CD4-positive, alpha-beta memory T cell (primary cell): ENCODE measurements at regions of chr6 and their contacts with region 1.

Region 1: DNA sequence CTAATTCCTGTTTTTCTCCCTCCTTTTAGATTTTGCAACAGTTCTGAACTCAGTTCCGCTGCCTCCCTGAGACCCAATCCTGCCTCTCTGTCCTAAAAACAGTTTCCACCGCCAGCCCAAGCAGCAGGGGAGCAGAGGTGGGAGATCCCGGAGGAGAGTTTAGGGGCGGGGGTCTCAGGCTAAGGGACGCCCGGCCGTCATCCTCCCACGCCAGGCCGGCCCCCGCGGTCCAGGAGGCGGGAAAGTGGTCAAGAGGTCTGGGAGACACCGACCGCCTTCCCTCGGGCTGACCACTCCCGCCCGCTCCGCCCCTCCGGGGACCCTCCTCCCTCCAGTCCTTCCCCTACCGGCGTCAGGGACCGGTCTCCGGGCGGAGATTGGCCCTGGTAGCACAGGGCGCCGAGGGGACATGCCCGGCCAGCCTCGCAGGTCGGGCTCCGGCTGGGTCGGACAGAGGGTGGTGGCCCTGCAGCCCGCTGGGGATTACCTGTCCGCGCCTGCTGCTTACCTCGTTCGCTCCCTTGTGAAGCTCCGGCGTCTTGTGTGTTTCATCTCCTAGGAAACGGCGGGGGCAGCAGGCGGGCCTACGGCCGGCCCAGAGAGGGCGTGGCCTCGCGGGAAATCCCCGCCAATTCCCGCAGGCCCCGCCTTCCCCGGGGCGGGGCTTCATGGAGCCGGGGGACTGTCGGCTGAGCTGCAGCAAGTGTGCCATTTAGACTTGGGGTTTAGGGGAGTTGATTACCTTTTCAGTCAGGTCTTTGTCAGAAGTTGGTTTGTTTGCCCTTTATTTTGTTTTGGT is at the start of gene MAK:
- DNase-seq: peak; percentile 89 to 91 (median 90)
- H3K4me3 ChIP-seq: peak within 1 kb of the TSS; percentile 5 to 44
- H3K4me3 Mint-ChIP-seq: peak within 1 kb of the TSS; percentile 79 to 92 (median 84)
- H3K27ac ChIP-seq: peak within 1 kb of the TSS; percentile 22
- H3K27ac Mint-ChIP-seq: peak within 1 kb of the TSS; percentile 36 to 90 (median 82)
- H3K4me1 ChIP-seq: peaks cover 25% of the 10 kb centered on the region
- H3K4me1 Mint-ChIP-seq: peaks cover 7 to 26% (median 20%) of the 10 kb centered on the region in 4 donors
- H3K27me3 ChIP-seq: peaks cover 41% of the 10 kb centered on the region
- H3K27me3 Mint-ChIP-seq: peaks cover 37 to 51% of the 10 kb centered on the region in 2 donors
- total RNA-seq, gene MAK: not detected

Region 2: DNA sequence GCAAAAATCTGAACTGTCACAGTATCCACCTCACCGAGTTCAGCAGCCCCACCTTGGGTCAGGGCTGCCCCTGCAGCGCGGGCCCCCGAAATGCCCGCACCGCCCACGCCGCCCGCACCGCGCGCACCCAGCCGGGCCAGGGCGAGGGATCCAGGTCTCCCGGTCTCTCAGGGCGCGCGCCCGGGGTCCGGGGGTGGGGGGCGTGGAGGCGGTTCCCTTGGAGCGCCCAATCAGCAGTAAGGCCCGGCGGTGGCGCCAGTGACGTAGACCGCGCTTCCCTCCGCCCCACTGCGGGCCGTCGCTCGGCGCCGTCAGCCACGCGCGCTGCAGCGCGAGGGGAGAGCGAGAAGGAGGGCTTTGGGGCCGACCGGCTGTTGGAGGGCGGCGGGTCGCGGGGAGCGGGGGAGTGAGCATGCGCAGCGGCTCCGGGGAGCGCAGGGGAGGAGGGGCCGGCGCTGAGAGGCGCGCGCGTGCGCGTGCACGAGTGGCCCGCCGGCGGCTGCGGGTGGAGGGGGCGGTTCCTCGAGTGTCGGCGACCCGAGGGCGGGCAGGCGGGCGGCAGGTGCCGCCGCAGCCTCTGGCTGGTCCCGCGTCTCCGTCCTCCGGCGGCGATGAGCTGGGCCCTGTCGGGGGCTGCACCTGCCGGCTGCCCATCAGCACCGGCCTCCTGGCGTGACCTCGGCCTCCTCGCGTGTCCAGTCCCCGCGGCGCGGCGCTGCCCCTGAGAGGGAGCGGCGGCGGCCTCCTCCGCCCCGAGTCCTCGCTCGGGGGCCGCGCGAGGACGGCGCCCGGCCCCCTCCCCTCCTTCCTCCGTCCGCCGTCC is 699.2 kb after region 1 on chr6 and contains the start of gene TMEM170B:
- CTCF ChIA-PET with region 1: no interaction called
- POLR2A ChIA-PET with region 1: no interaction called
- intact Hi-C with region 1: loop called (anchors 5 kb)
- DNase-seq: peak; percentile 94 to 98 (median 97)
- H3K4me3 ChIP-seq: peak within 1 kb of the TSS; percentile 60 to 77
- H3K4me3 Mint-ChIP-seq: peak within 1 kb of the TSS; percentile 86 to 92 (median 90)
- H3K27ac ChIP-seq: peak within 1 kb of the TSS; percentile 54
- H3K27ac Mint-ChIP-seq: peak within 1 kb of the TSS; percentile 72 to 94 (median 92)
- H3K4me1 ChIP-seq: peaks cover 11% of the 10 kb centered on the region
- H3K4me1 Mint-ChIP-seq: peaks cover 7 to 24% (median 9%) of the 10 kb centered on the region in 4 donors
- H3K27me3 ChIP-seq: no peaks in the 10 kb centered on the region
- H3K27me3 Mint-ChIP-seq: peaks cover 2 to 4% of the 10 kb centered on the region in 2 donors
- total RNA-seq, gene TMEM170B: 1.9 to 2.1 TPM